ENCODE measurements at regions of chr3 and their contacts with region 1.

Region 1: DNA sequence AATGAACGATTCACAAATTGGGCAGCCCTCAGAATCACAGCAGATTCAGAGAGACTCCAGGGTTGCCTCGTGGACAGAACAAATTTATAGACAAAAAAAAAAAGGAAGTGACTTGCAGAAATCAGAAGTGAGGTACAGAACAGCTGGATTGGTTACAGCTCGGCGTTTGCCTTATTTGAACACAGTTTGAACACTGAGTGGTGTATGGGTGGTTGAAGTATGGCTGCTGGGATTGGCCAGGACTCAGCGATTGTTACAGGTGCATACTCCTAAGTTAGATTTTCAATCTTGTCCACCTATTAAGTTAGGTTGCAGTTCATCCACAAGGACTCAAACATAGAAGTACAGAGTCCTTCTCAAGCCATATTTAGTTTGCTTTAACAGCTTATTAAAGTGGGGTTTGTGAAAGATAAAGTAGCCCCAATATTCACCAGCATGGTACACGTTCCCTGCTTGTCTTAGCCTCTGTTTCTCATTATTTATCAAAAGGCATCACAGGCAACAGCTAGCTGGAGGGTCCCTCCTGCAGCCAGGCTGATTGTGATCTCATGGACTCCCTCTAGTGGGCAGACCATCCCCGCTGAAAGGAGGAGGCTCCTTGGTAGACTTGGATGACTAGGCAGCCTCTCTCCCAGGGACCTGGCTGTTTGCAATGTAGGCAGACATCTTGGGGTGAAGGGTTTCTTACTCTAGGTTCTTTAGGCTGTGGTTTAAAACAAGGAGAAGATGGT is 17.6 kb upstream of the ALDH1L1 start:
- DNase-seq: peak; percentile 67
- ATAC-seq: peak; percentile 79 to 96

Region 2: GRCh38 chr3:125916376-125916978 is 281.5 kb before region 1 on chr3:
- intact Hi-C with region 1: loop called in 1 of 2 experiments (anchors 5 kb)
- DNase-seq: peak; percentile 100
- ATAC-seq: peak; percentile 98 to 100

Region 3: GRCh38 chr3:126134219-126134975 is 63.6 kb before region 1 on chr3:
- intact Hi-C with region 1: loop called (anchors 5 kb)
- DNase-seq: peak; percentile 73
- ATAC-seq: peak; percentile 86 to 88

Measured in left cardiac atrium (tissue), 4 donors.